ENCODE measurements at regions of chr19 and their contacts with region 1.

Region 1: DNA sequence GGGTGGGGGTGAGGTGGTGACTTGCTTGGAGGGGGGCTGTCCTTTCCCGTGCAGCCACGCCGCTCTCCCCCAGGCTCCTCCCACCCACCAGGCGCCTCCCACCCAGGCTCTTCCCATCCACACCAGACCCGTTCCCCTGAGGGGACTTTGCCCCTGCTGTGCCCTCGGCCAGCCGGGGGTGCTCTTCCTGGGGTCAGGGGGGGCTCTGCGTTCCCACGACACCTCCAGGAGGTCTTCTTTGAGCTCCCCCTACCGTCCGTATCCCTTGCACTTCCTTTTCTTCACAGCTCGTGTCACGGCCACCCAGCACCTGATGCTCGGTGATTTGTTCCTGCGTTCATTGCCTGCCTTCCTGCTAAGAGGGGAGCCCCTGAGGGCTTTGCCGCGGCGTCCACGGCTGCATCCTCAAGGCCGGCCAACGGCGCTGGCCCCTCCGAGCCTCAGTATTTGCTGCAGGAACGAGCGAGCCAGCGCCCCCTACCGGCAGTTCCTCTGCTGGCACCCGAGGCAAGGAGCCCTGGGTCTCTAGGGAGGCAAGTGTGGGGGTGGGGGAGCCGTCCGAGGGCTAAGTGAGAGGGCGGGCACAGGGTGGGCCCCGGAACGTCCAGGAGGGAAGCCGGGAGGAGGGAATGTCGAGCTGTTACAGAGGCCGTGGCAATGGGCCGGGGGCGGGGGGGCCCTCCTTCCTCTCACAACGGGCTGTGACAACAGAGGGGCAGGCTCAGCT is 11.8 kb downstream of the LRRC4B start:
- DNase-seq: peak; percentile 86
- H3K4me3 Mint-ChIP-seq: peak overlapping the region; percentile 81
- H3K27ac Mint-ChIP-seq: no peak overlapping the region
- H3K4me1 Mint-ChIP-seq: peaks cover 8% of the 10 kb centered on the region
- H3K27me3 Mint-ChIP-seq: peaks cover 57% of the 10 kb centered on the region

Region 2: DNA sequence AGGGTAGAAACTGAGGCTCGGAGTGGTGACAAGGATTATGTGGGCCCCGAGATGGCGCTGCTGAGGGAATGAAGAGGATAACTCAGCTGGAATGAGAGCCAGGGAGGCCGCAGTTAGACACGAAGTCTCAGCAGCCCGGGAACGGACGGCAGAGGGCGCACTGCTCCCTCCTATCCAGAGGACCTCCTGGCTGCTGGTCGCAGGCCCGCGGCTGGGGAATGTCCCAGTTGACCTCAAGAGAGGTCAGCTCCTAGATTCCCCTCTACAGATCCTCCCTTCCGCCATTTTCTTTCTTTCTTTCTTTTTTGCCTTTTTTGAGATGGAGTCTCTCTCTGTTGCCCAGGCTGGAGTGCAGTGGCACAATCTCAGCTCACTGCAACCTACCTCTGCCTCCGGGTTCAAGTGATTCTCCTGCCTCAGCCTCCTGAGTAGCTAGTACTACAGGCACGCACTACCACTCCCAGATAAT is 18.6 kb before region 1 on chr19:
- CTCF ChIA-PET with region 1: interaction called, 77 read pairs
- POLR2A ChIA-PET with region 1: no interaction called
- intact Hi-C with region 1: no loop called
- DNase-seq: peak; percentile 80
- H3K4me3 Mint-ChIP-seq: no peak overlapping the region
- H3K27ac Mint-ChIP-seq: no peak overlapping the region
- H3K4me1 Mint-ChIP-seq: peaks cover 4% of the 10 kb centered on the region
- H3K27me3 Mint-ChIP-seq: peaks cover 12% of the 10 kb centered on the region

Region 3: GRCh38 chr19:50568321-50569075 is 12.1 kb after region 1 on chr19 and contains the start of gene LRRC4B:
- CTCF ChIA-PET with region 1: interaction called, 22 read pairs
- POLR2A ChIA-PET with region 1: no interaction called
- intact Hi-C with region 1: no loop called
- DNase-seq: no peak
- H3K4me3 Mint-ChIP-seq: no peak within 1 kb of the TSS
- H3K27ac Mint-ChIP-seq: no peak within 1 kb of the TSS
- H3K4me1 Mint-ChIP-seq: peaks cover 17% of the 10 kb centered on the region
- H3K27me3 Mint-ChIP-seq: peaks cover 47% of the 10 kb centered on the region
- total RNA-seq, gene LRRC4B: not detected

Region 4: DNA sequence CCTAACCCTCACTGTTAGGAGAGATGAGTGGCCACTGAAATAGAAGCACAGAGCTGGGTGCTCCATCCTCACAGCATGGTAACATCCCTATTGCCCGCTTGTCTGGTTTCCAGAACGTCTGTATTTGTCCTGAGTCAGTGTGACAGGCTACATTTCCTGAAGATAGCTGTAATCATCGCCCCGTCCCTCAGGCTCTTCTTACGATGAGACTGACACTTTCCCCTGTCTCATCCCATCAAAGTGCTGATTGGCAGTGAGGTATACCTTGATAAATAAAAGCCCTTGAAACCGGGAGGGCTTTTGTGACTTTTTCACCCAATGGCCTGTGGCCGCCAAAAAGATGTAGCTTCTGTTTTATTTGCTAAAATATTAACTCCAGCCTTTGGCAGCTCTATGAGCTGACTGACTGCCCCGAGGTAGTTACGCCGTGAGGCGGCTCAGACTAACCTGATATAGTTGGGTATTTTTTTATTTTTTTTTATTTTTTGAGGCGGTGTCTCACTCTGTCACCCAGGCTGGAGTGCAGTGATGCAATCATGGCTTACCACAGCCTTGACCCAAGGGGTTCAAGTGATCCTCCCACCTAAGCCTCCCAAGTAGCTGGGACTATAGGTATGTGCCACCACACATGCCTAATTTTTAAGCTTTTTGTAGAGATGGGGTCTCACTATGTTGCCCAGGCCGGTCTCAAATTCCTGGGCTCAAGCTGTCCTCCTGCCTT is 17.5 kb after region 1 on chr19:
- CTCF ChIA-PET with region 1: interaction called, 22 read pairs
- POLR2A ChIA-PET with region 1: no interaction called
- intact Hi-C with region 1: no loop called
- DNase-seq: no peak
- H3K4me3 Mint-ChIP-seq: no peak overlapping the region
- H3K27ac Mint-ChIP-seq: no peak overlapping the region
- H3K4me1 Mint-ChIP-seq: no peaks in the 10 kb centered on the region
- H3K27me3 Mint-ChIP-seq: peaks cover 16% of the 10 kb centered on the region

Region 5: DNA sequence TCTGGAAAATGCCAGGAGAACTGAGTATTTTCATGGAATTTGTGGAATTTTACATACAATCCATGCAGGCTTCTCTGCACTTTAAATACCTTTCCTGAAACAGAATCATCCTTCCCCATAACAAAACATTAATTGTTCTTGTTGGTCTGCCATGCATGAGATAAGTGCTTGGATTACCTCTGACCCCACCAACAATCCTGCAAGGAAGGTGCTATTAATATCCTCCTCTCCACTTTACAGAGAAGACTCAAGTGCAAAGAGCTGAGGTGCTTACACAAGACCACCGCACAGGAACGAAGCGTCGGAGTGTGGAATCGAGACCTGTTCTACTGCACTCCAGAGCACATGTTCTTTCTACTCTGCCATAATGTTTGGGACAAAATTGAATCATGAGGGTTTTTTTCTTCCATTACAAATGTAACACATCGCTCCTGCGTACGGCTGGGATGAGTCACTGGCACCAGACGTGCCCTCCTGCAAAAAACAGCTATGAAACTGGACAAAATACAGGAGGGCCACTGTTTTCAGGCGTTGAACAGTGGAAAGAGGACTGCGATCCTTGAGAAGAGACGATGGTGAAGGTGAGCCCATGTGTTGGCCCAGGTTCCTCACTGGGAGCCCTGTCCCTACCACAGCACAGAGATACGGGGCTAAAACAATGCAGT is 24.7 kb after region 1 on chr19:
- CTCF ChIA-PET with region 1: interaction called, 18 read pairs
- POLR2A ChIA-PET with region 1: no interaction called
- intact Hi-C with region 1: no loop called
- DNase-seq: no peak
- H3K4me3 Mint-ChIP-seq: no peak overlapping the region
- H3K27ac Mint-ChIP-seq: no peak overlapping the region
- H3K4me1 Mint-ChIP-seq: no peaks in the 10 kb centered on the region
- H3K27me3 Mint-ChIP-seq: peaks cover 8% of the 10 kb centered on the region

Region 6: DNA sequence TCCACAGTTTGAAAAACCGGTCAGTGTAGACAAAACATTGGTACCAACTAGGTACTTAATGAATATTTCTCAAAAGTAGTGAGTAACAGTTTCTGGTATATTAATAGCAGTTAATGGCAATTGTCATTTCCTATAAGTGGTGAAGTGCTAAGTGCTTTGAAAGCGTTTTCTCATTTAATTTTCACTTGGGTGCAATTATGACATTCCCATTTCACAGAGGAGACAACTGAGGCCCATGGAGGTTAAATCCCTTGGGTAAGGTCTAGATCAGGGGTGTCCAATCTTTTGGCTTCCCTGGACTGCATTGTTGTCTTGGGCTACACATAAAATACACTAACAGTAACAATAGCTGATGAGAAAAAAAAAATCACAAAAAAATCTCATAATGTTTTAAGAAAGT is 83.9 kb after region 1 on chr19:
- CTCF ChIA-PET with region 1: no interaction called
- POLR2A ChIA-PET with region 1: no interaction called
- intact Hi-C with region 1: no loop called
- DNase-seq: no peak
- H3K4me3 Mint-ChIP-seq: no peak overlapping the region
- H3K27ac Mint-ChIP-seq: no peak overlapping the region
- H3K4me1 Mint-ChIP-seq: peaks cover 3% of the 10 kb centered on the region
- H3K27me3 Mint-ChIP-seq: peaks cover 46% of the 10 kb centered on the region